Activated CD8-positive, alpha-beta T cell treated with anti-CD3 and anti-CD28 coated beads, Interleukin-2, amount 10 ng/mL, durations not matched to agents 7 days and 5 days (primary cell): ENCODE measurements at regions of chr1 and their contacts with region 1.

Region 1: DNA sequence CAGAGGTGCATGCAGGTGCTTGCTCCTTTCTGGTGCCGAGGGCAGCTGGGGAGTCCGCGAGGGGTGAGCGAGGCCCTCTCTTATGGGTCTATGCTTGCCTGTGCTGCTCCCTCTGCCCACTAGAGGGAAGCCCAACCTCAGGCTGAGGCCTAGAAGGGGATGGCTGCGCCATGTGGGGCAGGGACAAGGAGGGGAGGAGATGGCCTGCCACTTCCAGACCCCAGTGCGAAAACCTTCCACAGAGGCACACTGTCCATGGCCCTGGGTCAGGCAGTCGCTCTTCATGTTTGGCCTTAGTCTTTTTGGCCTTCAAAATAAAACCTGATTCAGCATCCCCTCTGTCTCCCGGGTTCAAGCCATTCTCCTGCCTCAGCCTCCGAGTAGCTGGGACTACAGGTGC is 14.0 kb downstream of the RHBG start:
- DNase-seq: peak; percentile 72
- ATAC-seq: peak; percentile 82
- H3K4me3 Mint-ChIP-seq: no peak overlapping the region
- H3K27ac Mint-ChIP-seq: no peak overlapping the region
- H3K4me1 Mint-ChIP-seq: peaks cover 10% of the 10 kb centered on the region
- H3K27me3 Mint-ChIP-seq: peaks cover 15% of the 10 kb centered on the region

Region 2: DNA sequence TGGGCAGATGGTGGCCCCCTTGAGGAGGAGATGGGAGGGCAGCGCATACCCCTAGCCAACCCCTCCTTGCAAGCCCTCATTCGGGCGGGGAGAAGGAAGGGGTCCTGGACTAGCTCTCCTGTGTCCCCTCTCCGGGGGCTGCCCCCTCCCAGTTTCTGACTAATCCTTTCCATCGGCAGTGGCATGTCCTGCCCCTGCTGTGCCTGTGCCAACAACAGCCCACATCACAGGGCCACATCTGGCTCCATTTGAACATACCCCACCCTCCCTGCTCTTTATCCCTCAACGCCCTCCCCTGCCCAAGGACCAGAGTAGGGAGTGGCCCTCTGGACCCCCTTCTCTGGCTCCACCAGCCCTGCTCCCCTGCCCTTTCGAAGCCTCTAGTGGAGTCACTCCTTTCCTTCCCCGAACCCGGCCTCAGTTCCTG is 279.5 kb before region 1 on chr1:
- CTCF ChIA-PET with region 1: no interaction called
- POLR2A ChIA-PET with region 1: no interaction called
- DNase-seq: no peak
- ATAC-seq: no peak
- H3K4me3 Mint-ChIP-seq: no peak overlapping the region
- H3K27ac Mint-ChIP-seq: no peak overlapping the region
- H3K4me1 Mint-ChIP-seq: peaks cover 36% of the 10 kb centered on the region
- H3K27me3 Mint-ChIP-seq: peaks cover 34% of the 10 kb centered on the region

Region 3: DNA sequence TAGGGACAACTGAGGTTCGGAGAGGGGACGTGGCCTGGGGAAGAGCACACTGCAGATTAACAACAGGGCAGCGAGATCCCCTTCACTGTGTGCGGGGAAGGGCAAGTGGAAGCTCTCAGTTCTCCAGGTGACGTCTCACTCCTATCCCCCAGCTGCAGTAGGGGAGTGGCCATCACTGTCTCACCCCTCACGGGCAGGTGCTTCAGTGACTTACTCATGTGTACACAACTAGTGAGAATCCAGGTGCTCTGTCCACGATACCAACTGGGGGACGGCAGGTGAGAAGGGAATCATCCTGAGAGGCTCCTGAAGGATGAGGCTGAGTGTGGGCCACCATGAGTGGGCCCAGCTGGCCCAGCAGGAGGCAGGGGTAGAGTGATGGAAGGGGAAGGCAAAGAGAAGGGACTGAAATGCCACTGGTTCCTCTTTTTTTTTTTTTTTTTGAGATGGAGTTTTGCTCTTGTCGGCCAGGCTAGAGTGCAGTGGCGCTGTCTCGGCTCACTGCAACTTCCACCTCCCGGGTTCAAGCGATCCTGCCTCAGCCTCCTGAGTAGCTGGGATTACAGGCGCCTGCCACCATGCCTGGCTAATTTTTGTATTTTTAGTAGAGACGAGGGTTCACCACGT is 11.9 kb after region 1 on chr1:
- CTCF ChIA-PET with region 1: interaction called, 25 read pairs
- POLR2A ChIA-PET with region 1: no interaction called
- DNase-seq: no peak
- ATAC-seq: no peak
- H3K4me3 Mint-ChIP-seq: no peak overlapping the region
- H3K27ac Mint-ChIP-seq: no peak overlapping the region
- H3K4me1 Mint-ChIP-seq: no peaks in the 10 kb centered on the region
- H3K27me3 Mint-ChIP-seq: peaks cover 12% of the 10 kb centered on the region

Region 4: DNA sequence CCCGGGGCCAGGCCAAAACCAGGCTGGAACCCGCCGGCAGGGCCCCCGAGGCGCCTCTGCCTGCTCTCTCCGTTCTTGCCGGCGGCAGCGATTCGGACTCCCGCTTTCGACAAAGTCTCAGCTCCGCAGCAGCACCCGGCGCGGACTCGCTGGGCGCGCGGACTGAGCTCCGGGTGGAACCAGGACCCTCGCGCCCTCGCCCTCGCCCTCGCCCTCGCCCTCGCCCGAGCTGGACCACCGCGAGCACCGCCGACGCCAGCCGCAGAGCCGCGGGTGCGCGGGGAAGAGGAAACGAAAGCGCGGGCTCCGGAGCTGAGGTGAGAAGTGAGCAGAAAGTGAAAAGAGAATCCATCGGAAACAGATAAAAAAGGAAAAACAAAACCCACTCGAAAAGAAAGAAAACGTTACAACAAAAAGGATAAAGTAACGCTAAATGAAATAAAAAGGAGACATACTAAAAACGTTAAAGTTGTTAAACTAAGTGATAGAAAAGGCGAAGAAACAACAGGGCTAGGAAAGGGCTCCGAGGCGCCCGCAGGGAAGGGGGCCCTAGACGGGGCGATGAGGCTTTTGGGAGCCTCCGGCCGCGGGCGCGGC is 52.6 kb after region 1 on chr1:
- CTCF ChIA-PET with region 1: interaction called, 118 read pairs
- POLR2A ChIA-PET with region 1: interaction called, 3 read pairs
- DNase-seq: no peak
- ATAC-seq: peak; percentile 36
- H3K4me3 Mint-ChIP-seq: peak overlapping the region; percentile 66
- H3K27ac Mint-ChIP-seq: no peak overlapping the region
- H3K4me1 Mint-ChIP-seq: peaks cover 24% of the 10 kb centered on the region
- H3K27me3 Mint-ChIP-seq: peaks cover 87% of the 10 kb centered on the region

Region 5: DNA sequence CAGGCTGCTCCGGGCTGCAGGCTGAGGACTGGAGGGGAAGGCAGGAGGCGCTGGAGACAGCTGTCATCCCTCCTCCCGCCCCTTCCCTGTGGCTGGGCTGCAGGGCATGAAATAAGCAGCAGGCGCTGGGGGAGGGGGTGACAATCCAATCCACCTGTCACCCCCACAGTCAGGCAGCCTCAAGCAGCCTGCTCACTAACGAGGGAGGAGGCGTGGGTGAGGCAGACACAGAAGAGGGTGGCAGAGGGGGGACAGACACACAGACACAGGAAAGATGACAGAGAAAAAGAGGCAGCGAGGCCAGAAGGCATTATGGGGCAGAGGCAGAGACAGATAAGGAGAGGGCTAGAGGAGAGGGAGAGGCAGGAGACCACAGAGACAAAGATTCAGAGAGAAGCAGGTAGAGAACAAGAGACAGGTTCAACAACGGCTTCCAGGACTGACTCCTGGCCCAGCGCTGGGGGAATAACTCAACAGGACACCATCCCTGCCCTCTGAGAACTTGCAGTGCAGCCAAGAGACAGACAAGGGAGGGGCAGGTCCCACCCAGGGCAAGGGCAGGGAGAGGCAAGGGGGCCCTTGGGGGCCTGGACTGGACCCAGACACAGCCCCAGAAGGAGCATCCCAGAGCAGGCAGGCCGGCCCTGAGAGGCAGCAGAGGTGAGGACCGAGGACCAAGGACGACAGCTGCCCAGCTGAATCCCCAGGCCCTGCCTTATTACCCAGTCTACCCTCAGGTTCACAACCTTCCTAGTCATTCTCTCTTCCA is 106.3 kb after region 1 on chr1:
- CTCF ChIA-PET with region 1: interaction called, 23 read pairs
- POLR2A ChIA-PET with region 1: no interaction called
- DNase-seq: peak; percentile 55
- ATAC-seq: peak; percentile 53
- H3K4me3 Mint-ChIP-seq: peak overlapping the region; percentile 62
- H3K27ac Mint-ChIP-seq: peak overlapping the region; percentile 85
- H3K4me1 Mint-ChIP-seq: peaks cover 81% of the 10 kb centered on the region
- H3K27me3 Mint-ChIP-seq: no peaks in the 10 kb centered on the region

Region 6: DNA sequence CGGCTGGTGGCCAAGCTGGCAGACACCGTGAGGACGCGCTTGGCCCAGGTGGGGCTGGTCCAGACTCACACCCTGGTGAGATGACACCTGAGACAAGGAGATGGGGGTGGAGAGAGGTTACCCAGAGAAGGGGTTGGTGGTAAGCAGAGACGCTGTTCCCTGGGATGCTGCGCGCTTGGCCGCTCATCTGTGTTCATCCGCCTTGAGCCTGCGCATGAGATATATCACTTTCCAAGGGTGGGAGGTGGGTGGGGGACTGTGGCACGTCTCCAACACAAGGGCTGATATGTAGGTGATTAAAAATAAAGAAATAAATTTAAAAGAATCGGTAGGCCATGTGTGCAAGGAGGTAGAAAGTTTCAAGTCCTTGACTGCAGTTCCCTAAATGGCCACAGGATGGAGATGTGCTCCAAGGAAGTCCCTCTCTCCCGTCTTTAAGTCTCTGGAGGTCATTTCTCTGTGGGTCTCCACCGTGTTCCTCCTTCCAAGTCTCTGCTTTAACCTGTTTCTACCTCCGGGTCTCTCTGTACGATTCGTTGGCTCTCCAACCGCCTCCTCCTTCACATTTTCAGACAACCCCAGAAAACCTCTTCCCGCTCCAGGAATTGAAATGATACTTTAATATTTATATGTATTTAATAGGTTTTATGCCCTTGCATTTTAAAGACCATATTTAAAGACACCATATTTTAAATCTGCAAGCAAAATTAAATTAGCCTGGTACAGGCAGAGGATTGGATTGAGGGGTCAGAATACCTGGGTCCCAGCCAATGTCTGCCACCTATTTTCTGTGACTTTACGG is 201.0 kb after region 1 on chr1:
- CTCF ChIA-PET with region 1: interaction called, 18 read pairs
- POLR2A ChIA-PET with region 1: no interaction called
- DNase-seq: peak; percentile 88
- ATAC-seq: peak; percentile 17
- H3K4me3 Mint-ChIP-seq: peak overlapping the region; percentile 86
- H3K27ac Mint-ChIP-seq: peak overlapping the region; percentile 93
- H3K4me1 Mint-ChIP-seq: peaks cover 39% of the 10 kb centered on the region
- H3K27me3 Mint-ChIP-seq: no peaks in the 10 kb centered on the region

Region 7: GRCh38 chr1:156618853-156619581 is 236.0 kb after region 1 on chr1 and contains the start of gene HAPLN2:
- CTCF ChIA-PET with region 1: interaction called, 38 read pairs
- POLR2A ChIA-PET with region 1: no interaction called
- DNase-seq: peak; percentile 37
- ATAC-seq: no peak
- H3K4me3 Mint-ChIP-seq: no peak within 1 kb of the TSS
- H3K27ac Mint-ChIP-seq: no peak within 1 kb of the TSS
- H3K4me1 Mint-ChIP-seq: peaks cover 5% of the 10 kb centered on the region
- H3K27me3 Mint-ChIP-seq: peaks cover 58% of the 10 kb centered on the region
- total RNA-seq, gene HAPLN2: not detected